ENCODE measurements at regions of chr1 and their contacts with region 1.

Region 1: DNA sequence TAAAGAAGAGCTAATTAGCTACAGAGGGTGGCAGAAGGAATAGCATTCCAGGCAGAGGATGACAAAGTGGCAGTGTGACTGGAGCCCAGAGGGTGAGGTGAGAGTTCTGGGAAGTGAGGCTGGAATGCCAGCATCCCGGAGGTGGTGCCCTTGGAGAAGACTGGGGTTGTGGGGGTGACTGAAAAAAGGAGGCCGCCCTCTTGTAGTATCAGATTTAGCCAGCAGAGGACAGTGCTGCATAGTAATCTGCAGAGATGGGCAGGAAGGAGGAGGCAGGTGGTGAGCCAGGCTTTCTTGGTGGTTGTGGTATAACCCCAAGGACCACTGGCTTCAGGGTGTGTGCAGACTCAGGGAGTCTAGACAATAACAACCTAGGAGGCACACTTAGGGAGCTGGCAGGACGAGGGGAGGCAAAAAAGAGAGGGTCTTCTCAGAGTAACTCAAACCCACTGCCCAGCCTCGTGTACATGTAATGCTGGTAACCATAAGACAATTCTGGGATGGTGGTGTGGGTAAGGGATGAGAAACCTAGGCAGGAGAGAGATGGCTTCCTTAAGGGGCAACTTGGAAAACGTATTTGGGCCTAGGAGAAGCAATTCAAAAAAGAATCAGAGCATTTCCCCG is 30.5 kb downstream of the MROH7 start:
- DNase-seq: peak; percentile 41
- H3K4me3 ChIP-seq: no peak overlapping the region
- H3K27ac ChIP-seq: no peak overlapping the region
- H3K4me1 ChIP-seq: no peaks in the 10 kb centered on the region
- H3K27me3 ChIP-seq: peaks cover 3% of the 10 kb centered on the region
- CTCF ChIP-seq: peak; percentile 94 to 96

Region 2: DNA sequence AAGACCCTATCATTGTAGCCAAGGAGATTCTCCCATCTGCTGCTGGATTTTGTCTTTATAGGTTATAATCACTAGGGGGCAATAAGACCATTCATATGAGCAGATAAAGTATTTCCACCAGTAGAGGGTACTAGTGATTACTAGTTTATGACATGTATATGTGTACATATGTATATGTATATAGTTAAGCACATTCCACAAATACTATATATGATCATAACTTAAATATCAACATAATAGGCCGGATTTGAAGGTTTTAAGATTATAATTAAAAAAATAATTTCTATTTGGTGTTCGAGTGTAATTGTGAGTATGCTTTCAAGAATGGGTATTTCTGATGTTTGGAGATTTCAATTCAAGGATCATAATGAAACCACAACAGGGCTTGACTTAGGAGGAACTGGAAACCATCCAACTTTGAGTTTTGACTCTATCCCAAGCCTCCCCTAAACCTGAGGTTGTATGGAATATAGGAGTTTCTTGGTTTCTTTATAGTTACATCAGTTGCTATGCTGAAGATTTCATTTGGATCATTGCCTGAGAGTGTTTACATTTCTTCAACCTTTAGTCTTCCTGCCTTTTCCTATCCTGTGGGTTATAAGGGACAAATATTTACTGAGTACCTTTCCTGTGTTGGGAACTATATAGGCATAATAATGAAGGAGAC is 601.8 kb before region 1 on chr1:
- CTCF ChIA-PET with region 1: no interaction called
- dilution Hi-C with region 1: no loop called
- in situ Hi-C with region 1: no loop called
- intact Hi-C with region 1: loop called (anchors 10 kb)
- DNase-seq: peak; percentile 28
- H3K4me3 ChIP-seq: no peak overlapping the region
- H3K27ac ChIP-seq: no peak overlapping the region
- H3K4me1 ChIP-seq: no peaks in the 10 kb centered on the region
- H3K27me3 ChIP-seq: no peaks in the 10 kb centered on the region
- CTCF ChIP-seq: peak; percentile 76 to 79

Region 3: GRCh38 chr1:54709547-54710467 is 37.7 kb after region 1 on chr1:
- CTCF ChIA-PET with region 1: no interaction called
- dilution Hi-C with region 1: loop called (anchors 5 kb)
- in situ Hi-C with region 1: no loop called
- intact Hi-C with region 1: no loop called
- DNase-seq: no peak
- H3K4me3 ChIP-seq: no peak overlapping the region
- H3K27ac ChIP-seq: no peak overlapping the region
- H3K4me1 ChIP-seq: no peaks in the 10 kb centered on the region
- H3K27me3 ChIP-seq: no peaks in the 10 kb centered on the region
- CTCF ChIP-seq: no peak